ENCODE measurements at regions of chr6 and their contacts with region 1.

Region 1: DNA sequence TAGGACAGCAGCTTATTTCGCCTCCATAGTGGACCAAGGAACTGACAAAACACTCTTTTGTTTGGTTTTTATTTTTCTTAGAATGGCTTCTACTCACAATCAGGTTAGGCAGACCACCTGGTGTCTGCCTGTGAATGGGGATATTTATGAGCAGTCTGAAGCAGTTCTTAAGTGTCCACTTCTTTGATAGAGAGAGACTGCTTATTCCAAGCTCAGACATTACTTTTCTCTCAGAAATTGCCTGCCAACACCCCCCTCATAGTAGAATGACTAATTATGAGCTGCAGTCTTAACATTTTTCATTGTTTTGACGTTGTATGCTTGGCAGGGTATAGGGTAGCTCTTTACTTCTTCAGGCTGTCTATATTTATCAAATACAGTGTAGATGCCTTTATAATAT is 174.7 kb downstream of the ZFAND3 start:
- DNase-seq: no peak
- H3K4me3 ChIP-seq: no peak overlapping the region
- H3K27ac ChIP-seq: no peak overlapping the region
- H3K4me1 ChIP-seq: no peaks in the 10 kb centered on the region
- H3K27me3 ChIP-seq: no peaks in the 10 kb centered on the region
- CTCF ChIP-seq: no peak
- POLR2A ChIP-seq: no peak

Region 2: DNA sequence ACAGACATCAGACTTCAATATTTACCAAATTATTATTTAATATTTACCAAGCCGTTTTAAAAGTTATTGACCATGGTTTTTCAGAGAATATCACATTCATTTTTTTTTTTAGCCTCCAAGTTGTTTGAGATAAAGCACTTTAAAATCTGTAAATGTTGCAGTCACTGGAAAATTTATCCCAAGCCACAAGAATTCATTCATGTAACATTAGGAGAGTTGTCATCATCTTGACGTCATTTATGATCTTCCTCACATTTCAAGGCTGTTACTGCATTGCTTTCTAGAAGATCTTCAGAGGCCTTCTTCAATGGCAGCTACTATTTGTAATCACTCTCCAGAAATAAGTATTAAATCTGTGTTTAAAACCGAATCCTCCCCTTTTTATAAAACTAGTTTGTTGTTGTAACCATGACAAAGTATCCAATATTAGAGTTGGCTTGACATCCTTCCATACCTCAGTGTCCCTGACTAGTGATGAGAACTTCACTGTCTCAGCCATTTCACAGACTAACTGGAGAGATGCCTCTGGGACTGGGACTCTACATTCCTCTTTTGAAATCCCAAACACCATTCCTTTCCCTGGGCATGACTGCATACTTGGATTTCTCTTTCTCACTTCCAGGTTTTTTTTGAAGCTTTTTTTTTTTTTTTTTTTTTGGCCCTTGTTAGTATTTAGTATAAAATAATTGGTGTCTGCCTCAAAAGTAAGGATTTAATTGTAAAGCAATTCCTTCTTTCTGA is 74.7 kb before region 1 on chr6:
- intact Hi-C with region 1: loop called (anchors 2 kb)
- DNase-seq: no peak
- H3K4me3 ChIP-seq: no peak overlapping the region
- H3K27ac ChIP-seq: no peak overlapping the region
- H3K4me1 ChIP-seq: no peaks in the 10 kb centered on the region
- H3K27me3 ChIP-seq: no peaks in the 10 kb centered on the region
- CTCF ChIP-seq: no peak
- POLR2A ChIP-seq: no peak

Region 3: DNA sequence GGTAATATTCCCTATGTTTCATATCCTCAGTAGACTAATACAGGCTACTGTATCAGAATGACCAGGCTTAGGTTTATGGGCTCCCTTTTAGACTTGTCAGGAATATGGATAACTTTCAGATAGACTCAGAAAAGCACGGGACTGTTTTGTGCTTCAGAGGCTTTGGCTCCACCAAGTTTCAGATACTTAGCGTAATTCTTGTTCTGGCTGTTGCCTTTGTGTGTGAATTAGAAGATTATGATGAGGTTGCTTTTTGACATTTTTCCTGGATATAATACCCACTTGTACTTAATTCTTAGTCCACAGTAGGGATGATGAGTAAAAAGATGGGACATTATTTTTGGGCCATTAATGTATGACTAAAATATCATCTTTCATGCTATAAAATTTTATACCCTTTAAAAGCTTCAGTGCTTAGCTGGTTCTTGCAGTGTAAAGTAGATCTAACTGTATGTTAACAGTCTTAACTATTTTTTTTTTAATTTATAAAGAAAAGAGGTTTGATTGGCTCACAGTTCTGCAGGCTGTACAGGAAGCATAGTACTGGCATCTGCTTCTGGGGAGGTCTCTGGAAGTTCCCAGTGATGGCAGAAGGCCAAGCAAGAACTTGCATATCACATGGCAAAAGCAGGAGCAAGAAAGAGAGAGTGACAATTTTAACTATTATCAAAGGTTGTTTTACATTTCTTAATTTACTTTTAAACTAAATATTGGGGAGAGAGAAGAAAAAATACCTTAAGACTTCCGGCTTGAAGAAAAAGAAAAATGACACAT is 54.0 kb before region 1 on chr6:
- intact Hi-C with region 1: no loop called
- DNase-seq: peak; percentile 16
- H3K4me3 ChIP-seq: no peak overlapping the region
- H3K27ac ChIP-seq: no peak overlapping the region
- H3K4me1 ChIP-seq: no peaks in the 10 kb centered on the region
- H3K27me3 ChIP-seq: no peaks in the 10 kb centered on the region
- CTCF ChIP-seq: no peak
- POLR2A ChIP-seq: no peak

Measured in prostate gland (tissue), 2 donors.